H1 (cell line): ENCODE measurements at regions of chr14 and their contacts with region 1.

Region 1: GRCh38 chr14:95993768-95994592 is 45.2 kb upstream of the C14orf132 start:
- DNase-seq: peak; percentile 60 to 78
- H3K4me3 ChIP-seq: peak overlapping the region in 2 of 4 experiments; percentile 1 to 4; a peak in 2 of 8 replicates
- H3K27ac ChIP-seq: peak overlapping the region; percentile 30; the same call in 1 of the 2 replicates
- H3K4me1 ChIP-seq: peaks cover 7 to 17% (median 11%) of the 10 kb centered on the region in 4 experiments
- H3K27me3 ChIP-seq: no peaks in the 10 kb centered on the region
- CTCF ChIP-seq: peak in 2 of 3 experiments; percentile 78 to 87; a peak in 3 of 4 replicates
- EP300 ChIP-seq: no peak; a peak in 1 of 3 replicates
- POLR2A ChIP-seq: no peak
- RAD21 ChIP-seq: peak; percentile 96 to 97

Region 2: DNA sequence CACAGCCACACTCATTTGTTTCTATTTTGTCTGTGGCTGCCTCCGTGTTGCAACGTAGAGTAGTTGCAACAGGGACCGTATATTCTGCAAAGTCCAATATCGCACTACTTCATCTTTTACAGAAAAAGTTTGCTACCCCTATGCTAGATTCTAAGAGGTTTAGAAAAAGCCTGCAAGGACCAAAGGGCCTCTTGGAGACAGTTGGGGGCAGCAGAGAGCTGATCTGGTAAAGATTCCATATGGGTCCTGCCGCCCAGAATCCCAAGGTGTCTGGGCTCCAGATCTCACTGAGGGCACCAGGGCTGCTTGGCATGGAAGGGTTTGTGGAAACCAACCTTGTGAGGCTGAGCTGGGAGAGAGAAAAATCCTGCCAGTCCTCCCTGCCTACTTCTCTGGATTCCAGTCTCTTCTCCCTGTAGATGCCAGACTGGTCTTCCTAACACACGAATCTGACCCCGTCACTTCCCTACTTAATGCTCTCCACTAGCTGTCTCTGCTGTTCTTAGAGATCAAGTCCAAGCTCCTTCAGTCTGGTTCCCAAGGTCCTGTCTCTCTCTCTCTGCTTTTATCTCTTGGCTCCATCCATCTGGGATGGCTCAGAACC is 384.5 kb before region 1 on chr14:
- CTCF ChIA-PET with region 1: interaction called, 25 read pairs
- POLR2A ChIA-PET with region 1: no interaction called
- DNase-seq: peak in 1 of 2 experiments; percentile 80
- H3K4me3 ChIP-seq: no peak overlapping the region
- H3K27ac ChIP-seq: no peak overlapping the region
- H3K4me1 ChIP-seq: no peaks in the 10 kb centered on the region; a peak in 1 of 7 replicates
- H3K27me3 ChIP-seq: peaks cover 0 to 4% (median 0%) of the 10 kb centered on the region in 4 experiments; a peak in 1 of 7 replicates
- CTCF ChIP-seq: peak; percentile 47 to 83 (median 82)
- EP300 ChIP-seq: no peak
- POLR2A ChIP-seq: no peak
- RAD21 ChIP-seq: peak; percentile 87 to 90

Region 3: DNA sequence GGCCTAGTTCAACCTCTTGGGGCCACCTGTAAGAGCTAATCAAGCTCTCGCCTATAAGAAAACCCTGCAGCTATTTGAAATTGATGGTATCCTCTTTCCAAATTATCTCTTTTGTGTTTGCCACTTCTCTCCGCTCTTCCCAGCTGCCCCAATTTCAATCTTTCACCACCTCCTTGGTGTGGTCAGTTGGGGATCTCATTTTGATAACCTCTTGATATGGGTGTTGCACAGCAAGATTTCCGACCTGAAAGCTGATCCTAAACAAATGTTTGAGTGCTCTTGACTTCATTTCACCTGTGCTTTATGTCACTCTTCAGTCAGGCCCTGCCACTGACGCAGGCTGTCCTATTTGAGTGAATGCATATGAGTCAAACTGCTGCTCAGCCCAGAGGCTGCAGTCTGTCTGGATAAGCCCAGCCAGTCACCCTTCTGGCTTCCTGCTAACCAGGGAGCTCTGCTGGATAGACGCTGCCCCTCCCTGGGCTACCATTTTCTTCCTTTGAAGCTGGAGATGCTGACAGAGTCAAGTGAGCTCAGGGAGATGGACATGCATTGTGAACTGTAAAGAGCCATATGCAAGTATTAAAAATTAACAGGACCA is 122.6 kb before region 1 on chr14:
- CTCF ChIA-PET with region 1: interaction called, 10 read pairs
- POLR2A ChIA-PET with region 1: interaction called, 6 read pairs
- DNase-seq: no peak
- H3K4me3 ChIP-seq: no peak overlapping the region
- H3K27ac ChIP-seq: no peak overlapping the region
- H3K4me1 ChIP-seq: peaks cover 0 to 10% (median 5%) of the 10 kb centered on the region in 4 experiments; a peak in 3 of 7 replicates
- H3K27me3 ChIP-seq: peaks cover 0 to 7% (median 5%) of the 10 kb centered on the region in 4 experiments; a peak in 5 of 7 replicates
- CTCF ChIP-seq: no peak
- EP300 ChIP-seq: no peak
- POLR2A ChIP-seq: no peak
- RAD21 ChIP-seq: no peak

Region 4: GRCh38 chr14:95915323-95915722 is 78.7 kb before region 1 on chr14:
- CTCF ChIA-PET with region 1: interaction called, 10 read pairs
- POLR2A ChIA-PET with region 1: interaction called, 4 read pairs
- DNase-seq: peak; percentile 33 to 64
- H3K4me3 ChIP-seq: no peak overlapping the region
- H3K27ac ChIP-seq: no peak overlapping the region
- H3K4me1 ChIP-seq: peaks cover 8 to 16% (median 12%) of the 10 kb centered on the region in 4 experiments
- H3K27me3 ChIP-seq: no peaks in the 10 kb centered on the region
- CTCF ChIP-seq: peak; percentile 4 to 19 (median 16); a peak in 3 of 4 replicates
- EP300 ChIP-seq: no peak
- POLR2A ChIP-seq: no peak
- RAD21 ChIP-seq: peak; percentile 13 to 20; a peak in 1 of 4 replicates

Region 5: GRCh38 chr14:95979339-95980042 is 14.5 kb before region 1 on chr14:
- CTCF ChIA-PET with region 1: interaction called, 81 read pairs
- POLR2A ChIA-PET with region 1: interaction called, 33 read pairs
- DNase-seq: peak; percentile 57 to 58
- H3K4me3 ChIP-seq: peak overlapping the region in 2 of 4 experiments; percentile 14 to 36; a peak in 2 of 8 replicates
- H3K27ac ChIP-seq: peak overlapping the region; percentile 88
- H3K4me1 ChIP-seq: peaks cover 15 to 28% (median 25%) of the 10 kb centered on the region in 4 experiments
- H3K27me3 ChIP-seq: no peaks in the 10 kb centered on the region
- CTCF ChIP-seq: peak; percentile 25 to 58 (median 54)
- EP300 ChIP-seq: peak in 1 of 2 experiments; percentile 80; a peak in 1 of 3 replicates
- POLR2A ChIP-seq: no peak
- RAD21 ChIP-seq: peak; percentile 64 to 75